WTC11 (cell line): ENCODE measurements at regions of chr3 and their contacts with region 1.

Region 1: GRCh38 chr3:142180761-142181362 is 31.5 kb upstream of the TFDP2 start:
- DNase-seq: peak; percentile 48
- ATAC-seq: peak; percentile 82
- H3K4me3 Mint-ChIP-seq: no peak overlapping the region
- H3K27ac Mint-ChIP-seq: no peak overlapping the region; the same call in 1 of the 2 replicates
- H3K4me1 Mint-ChIP-seq: no peaks in the 10 kb centered on the region
- H3K27me3 Mint-ChIP-seq: no peaks in the 10 kb centered on the region
- CTCF ChIP-seq: peak; percentile 39; the same call in 1 of the 2 replicates

Region 2: GRCh38 chr3:142165194-142165593 is 15.7 kb before region 1 on chr3:
- CTCF ChIA-PET with region 1: interaction called, 11 read pairs
- POLR2A ChIA-PET with region 1: no interaction called
- DNase-seq: no peak
- ATAC-seq: no peak
- H3K4me3 Mint-ChIP-seq: no peak overlapping the region
- H3K27ac Mint-ChIP-seq: no peak overlapping the region
- H3K4me1 Mint-ChIP-seq: peaks cover 29% of the 10 kb centered on the region
- H3K27me3 Mint-ChIP-seq: no peaks in the 10 kb centered on the region; the same call in 1 of the 2 replicates
- CTCF ChIP-seq: no peak

Region 3: GRCh38 chr3:142211035-142211434 is 30.2 kb after region 1 on chr3:
- CTCF ChIA-PET with region 1: interaction called, 16 read pairs
- POLR2A ChIA-PET with region 1: no interaction called
- DNase-seq: peak; percentile 32
- ATAC-seq: peak; percentile 90
- H3K4me3 Mint-ChIP-seq: no peak overlapping the region
- H3K27ac Mint-ChIP-seq: no peak overlapping the region
- H3K4me1 Mint-ChIP-seq: peaks cover 13% of the 10 kb centered on the region
- H3K27me3 Mint-ChIP-seq: no peaks in the 10 kb centered on the region
- CTCF ChIP-seq: no peak

Region 4: GRCh38 chr3:142348460-142348859 is 167.6 kb after region 1 on chr3:
- CTCF ChIA-PET with region 1: no interaction called
- POLR2A ChIA-PET with region 1: no interaction called
- DNase-seq: no peak
- ATAC-seq: no peak
- H3K4me3 Mint-ChIP-seq: no peak overlapping the region
- H3K27ac Mint-ChIP-seq: no peak overlapping the region
- H3K4me1 Mint-ChIP-seq: no peaks in the 10 kb centered on the region
- H3K27me3 Mint-ChIP-seq: no peaks in the 10 kb centered on the region
- CTCF ChIP-seq: no peak

Region 5: GRCh38 chr3:142374687-142375086 is 193.8 kb after region 1 on chr3:
- CTCF ChIA-PET with region 1: no interaction called
- POLR2A ChIA-PET with region 1: no interaction called
- DNase-seq: no peak
- ATAC-seq: no peak
- H3K4me3 Mint-ChIP-seq: no peak overlapping the region
- H3K27ac Mint-ChIP-seq: no peak overlapping the region
- H3K4me1 Mint-ChIP-seq: no peaks in the 10 kb centered on the region
- H3K27me3 Mint-ChIP-seq: no peaks in the 10 kb centered on the region
- CTCF ChIP-seq: no peak

Region 6: DNA sequence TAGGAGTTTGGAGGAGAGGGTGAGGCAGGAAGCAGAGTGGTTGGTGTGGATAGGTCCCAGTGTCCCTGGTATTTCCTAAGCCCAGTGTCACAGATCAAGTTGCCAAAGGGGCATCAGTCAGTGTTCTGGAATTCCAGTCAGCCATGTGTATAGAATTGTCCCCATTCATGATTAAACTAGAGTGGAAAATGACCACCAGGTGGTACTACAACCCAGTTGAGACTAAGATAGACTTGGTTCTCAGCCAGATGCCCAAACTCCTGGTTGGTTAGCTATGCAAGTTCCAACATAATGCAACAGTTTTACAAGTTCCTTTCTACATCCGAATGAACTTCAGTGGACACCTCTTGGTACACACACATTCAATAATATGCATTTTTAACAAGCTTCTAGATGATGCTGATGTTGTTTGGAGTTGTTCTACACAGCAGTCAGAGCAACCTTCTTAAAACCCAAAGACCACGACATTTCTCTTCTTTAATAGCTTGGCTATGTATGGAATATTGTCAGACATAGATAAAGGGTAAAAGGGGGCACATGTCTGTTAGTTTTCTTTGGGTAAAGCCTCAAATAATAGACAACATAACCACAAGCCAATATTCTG is 406.0 kb after region 1 on chr3:
- CTCF ChIA-PET with region 1: no interaction called
- POLR2A ChIA-PET with region 1: no interaction called
- DNase-seq: no peak
- ATAC-seq: peak; percentile 96
- H3K4me3 Mint-ChIP-seq: no peak overlapping the region
- H3K27ac Mint-ChIP-seq: no peak overlapping the region
- H3K4me1 Mint-ChIP-seq: no peaks in the 10 kb centered on the region
- H3K27me3 Mint-ChIP-seq: no peaks in the 10 kb centered on the region
- CTCF ChIP-seq: peak; percentile 46; the same call in 1 of the 2 replicates